ENCODE measurements at regions of chr2 and their contacts with region 1.

Region 1: GRCh38 chr2:232809349-232810124 is 33.2 kb upstream of the KCNJ13 start:
- DNase-seq: no peak
- H3K4me3 ChIP-seq: no peak overlapping the region
- H3K27ac ChIP-seq: no peak overlapping the region
- H3K4me1 ChIP-seq: no peaks in the 10 kb centered on the region
- H3K27me3 ChIP-seq: no peaks in the 10 kb centered on the region
- CTCF ChIP-seq: no peak

Region 2: GRCh38 chr2:232697100-232697865 is 112.3 kb before region 1 on chr2 and contains the start of gene GIGYF2:
- CTCF ChIA-PET with region 1: interaction called, 16 read pairs
- dilution Hi-C with region 1: no loop called
- in situ Hi-C with region 1: no loop called
- intact Hi-C with region 1: no loop called
- DNase-seq: peak; percentile 99
- H3K4me3 ChIP-seq: peak within 1 kb of the TSS; percentile 64 to 99 (median 92)
- H3K27ac ChIP-seq: peak within 1 kb of the TSS; percentile 77
- H3K4me1 ChIP-seq: peaks cover 21% of the 10 kb centered on the region
- H3K27me3 ChIP-seq: no peaks in the 10 kb centered on the region
- CTCF ChIP-seq: no peak
- total RNA-seq, gene GIGYF2: 45.3 to 52.2 TPM

Region 3: DNA sequence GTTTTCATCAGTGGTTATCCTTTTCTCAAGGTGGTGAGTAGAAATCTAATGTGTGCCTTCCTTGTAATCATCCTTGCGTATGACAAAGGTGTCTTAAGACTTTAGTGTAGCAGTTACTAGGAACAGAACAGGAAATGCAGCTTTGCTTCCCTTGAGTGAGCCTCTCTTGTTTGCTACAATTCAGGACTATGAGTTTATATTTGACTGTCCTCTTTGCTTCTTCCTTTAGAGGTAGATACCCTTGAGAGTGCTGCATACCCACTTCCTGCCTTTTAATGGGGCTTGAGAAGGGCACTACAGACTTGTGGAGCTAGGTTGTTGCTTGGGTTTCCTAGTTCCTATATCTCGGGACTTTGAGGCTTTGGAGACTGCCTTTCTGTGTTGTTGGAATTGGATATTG is 37.0 kb before region 1 on chr2:
- CTCF ChIA-PET with region 1: no interaction called
- dilution Hi-C with region 1: no loop called
- in situ Hi-C with region 1: no loop called
- intact Hi-C with region 1: no loop called
- DNase-seq: no peak
- H3K4me3 ChIP-seq: no peak overlapping the region
- H3K27ac ChIP-seq: no peak overlapping the region
- H3K4me1 ChIP-seq: no peaks in the 10 kb centered on the region
- H3K27me3 ChIP-seq: no peaks in the 10 kb centered on the region
- CTCF ChIP-seq: no peak

Region 4: DNA sequence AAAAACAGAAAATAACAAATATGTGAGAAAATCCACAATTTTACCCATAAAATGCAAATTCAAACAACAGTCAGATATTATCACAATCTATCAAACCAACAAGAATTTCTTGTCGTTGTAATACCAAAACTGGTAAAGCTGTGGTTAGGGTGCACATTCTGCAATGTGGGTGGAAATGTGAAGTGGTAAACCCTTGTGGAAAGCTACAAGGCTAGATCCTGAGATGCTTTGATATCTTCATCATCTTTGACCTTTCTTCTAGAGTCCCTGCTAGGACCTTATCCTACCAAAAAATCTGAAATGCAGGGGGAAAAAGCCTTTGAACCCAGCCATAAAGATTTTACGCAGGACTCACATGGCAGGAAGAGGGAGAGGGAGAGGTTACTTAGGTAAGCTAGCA is 424.7 kb after region 1 on chr2:
- CTCF ChIA-PET with region 1: no interaction called
- dilution Hi-C with region 1: no loop called
- in situ Hi-C with region 1: no loop called
- intact Hi-C with region 1: no loop called
- DNase-seq: no peak
- H3K4me3 ChIP-seq: no peak overlapping the region
- H3K27ac ChIP-seq: no peak overlapping the region
- H3K4me1 ChIP-seq: no peaks in the 10 kb centered on the region
- H3K27me3 ChIP-seq: no peaks in the 10 kb centered on the region
- CTCF ChIP-seq: no peak